Endothelial cell of umbilical vein (primary cell): ENCODE measurements at regions of chr7 and their contacts with region 1.

Region 1: GRCh38 chr7:96538632-96539031 is 171.0 kb downstream of the SEM1 start:
- DNase-seq: no peak
- H3K4me3 ChIP-seq: no peak overlapping the region
- H3K27ac ChIP-seq: no peak overlapping the region
- H3K4me1 ChIP-seq: no peaks in the 10 kb centered on the region
- H3K27me3 ChIP-seq: no peaks in the 10 kb centered on the region
- CTCF ChIP-seq: no peak
- POLR2A ChIP-seq: no peak

Region 2: DNA sequence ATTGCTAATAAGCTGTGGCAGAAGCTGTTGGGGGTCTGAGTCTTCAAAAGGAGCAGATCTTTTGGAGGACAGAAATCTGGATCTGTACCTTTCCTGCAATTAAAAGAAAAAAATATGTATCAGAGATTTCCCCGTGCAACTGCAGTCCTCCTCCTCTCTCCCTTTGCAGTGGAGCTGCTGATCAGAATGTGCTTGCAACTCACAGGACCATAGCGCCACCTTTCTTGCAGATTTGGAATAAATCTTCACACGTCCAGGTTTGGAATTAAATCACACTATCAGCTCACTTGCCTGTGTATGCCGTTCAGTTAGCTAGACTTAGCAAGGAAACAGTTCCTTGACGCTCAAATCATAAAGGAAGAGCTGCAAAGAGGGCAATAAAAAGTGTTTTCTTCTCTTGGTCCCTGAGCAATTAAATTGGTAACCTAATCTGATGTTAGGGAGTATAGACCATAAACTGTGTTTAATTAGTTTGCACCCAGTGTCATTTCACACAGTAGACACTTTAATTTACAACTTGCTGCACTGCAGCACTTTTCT is 1291.7 kb before region 1 on chr7:
- CTCF ChIA-PET with region 1: no interaction called
- POLR2A ChIA-PET with region 1: no interaction called
- dilution Hi-C with region 1: no loop called
- intact Hi-C with region 1: no loop called
- DNase-seq: peak; percentile 71
- H3K4me3 ChIP-seq: no peak overlapping the region
- H3K27ac ChIP-seq: no peak overlapping the region
- H3K4me1 ChIP-seq: no peaks in the 10 kb centered on the region
- H3K27me3 ChIP-seq: no peaks in the 10 kb centered on the region
- CTCF ChIP-seq: peak; percentile 63 to 68
- POLR2A ChIP-seq: no peak

Region 3: GRCh38 chr7:96479015-96479645 is 59.5 kb before region 1 on chr7:
- CTCF ChIA-PET with region 1: no interaction called
- POLR2A ChIA-PET with region 1: no interaction called
- dilution Hi-C with region 1: no loop called
- intact Hi-C with region 1: loop called (anchors 10 kb)
- DNase-seq: peak; percentile 64
- H3K4me3 ChIP-seq: no peak overlapping the region
- H3K27ac ChIP-seq: no peak overlapping the region
- H3K4me1 ChIP-seq: no peaks in the 10 kb centered on the region
- H3K27me3 ChIP-seq: no peaks in the 10 kb centered on the region
- CTCF ChIP-seq: no peak
- POLR2A ChIP-seq: no peak

Region 4: GRCh38 chr7:96729822-96730221 is 191.2 kb after region 1 on chr7:
- CTCF ChIA-PET with region 1: no interaction called
- POLR2A ChIA-PET with region 1: no interaction called
- dilution Hi-C with region 1: no loop called
- intact Hi-C with region 1: no loop called
- DNase-seq: no peak
- H3K4me3 ChIP-seq: no peak overlapping the region
- H3K27ac ChIP-seq: no peak overlapping the region
- H3K4me1 ChIP-seq: no peaks in the 10 kb centered on the region
- H3K27me3 ChIP-seq: peaks cover 3 to 4% of the 10 kb centered on the region in 2 experiments
- CTCF ChIP-seq: no peak
- POLR2A ChIP-seq: no peak